Motor neuron (in vitro differentiated cells): ENCODE measurements at regions of chr1 and their contacts with region 1.

Region 1: DNA sequence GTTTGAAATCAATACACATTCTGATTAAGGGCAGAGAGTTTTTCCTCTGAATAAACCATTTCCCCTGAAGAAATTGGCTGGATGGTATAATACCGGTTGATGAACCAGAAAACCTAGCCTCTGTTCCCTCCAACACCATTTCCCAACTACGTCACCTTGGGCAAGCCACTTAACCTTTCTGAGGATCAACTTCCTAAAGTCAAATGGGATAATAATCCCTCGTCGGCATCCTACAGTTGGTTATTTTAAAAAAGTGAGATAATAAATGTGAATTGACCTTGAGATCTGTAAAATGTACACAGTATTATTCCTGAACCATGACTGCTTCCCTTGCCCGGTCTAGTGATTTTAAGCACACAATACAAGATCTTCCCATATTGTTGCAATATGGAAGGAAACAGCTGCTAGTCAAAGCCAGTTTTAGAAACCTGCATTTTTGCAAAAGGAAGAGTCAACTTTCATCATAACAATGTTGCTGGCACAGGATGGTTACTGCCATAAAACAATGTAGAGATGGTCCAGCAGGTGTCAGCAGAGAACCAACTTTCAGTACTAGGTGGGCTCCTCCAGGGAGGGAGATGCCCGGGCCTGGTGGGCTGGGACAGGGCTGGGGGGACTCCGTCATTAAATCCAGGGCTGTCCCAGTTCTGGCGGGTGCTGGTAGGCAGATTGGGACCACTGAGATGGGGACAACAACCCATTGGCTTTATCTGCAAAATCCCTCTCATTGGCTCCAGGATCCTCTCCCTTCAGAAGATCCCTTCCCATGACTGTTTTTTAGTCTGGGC is 5.2 kb upstream of the HLX start:
- ATAC-seq: peak; percentile 32 to 87 (median 74)
- H3K4me3 ChIP-seq: no peak overlapping the region
- H3K27ac ChIP-seq: no peak overlapping the region
- H3K4me1 ChIP-seq: peaks cover 9 to 18% of the 10 kb centered on the region in 2 donors

Region 2: DNA sequence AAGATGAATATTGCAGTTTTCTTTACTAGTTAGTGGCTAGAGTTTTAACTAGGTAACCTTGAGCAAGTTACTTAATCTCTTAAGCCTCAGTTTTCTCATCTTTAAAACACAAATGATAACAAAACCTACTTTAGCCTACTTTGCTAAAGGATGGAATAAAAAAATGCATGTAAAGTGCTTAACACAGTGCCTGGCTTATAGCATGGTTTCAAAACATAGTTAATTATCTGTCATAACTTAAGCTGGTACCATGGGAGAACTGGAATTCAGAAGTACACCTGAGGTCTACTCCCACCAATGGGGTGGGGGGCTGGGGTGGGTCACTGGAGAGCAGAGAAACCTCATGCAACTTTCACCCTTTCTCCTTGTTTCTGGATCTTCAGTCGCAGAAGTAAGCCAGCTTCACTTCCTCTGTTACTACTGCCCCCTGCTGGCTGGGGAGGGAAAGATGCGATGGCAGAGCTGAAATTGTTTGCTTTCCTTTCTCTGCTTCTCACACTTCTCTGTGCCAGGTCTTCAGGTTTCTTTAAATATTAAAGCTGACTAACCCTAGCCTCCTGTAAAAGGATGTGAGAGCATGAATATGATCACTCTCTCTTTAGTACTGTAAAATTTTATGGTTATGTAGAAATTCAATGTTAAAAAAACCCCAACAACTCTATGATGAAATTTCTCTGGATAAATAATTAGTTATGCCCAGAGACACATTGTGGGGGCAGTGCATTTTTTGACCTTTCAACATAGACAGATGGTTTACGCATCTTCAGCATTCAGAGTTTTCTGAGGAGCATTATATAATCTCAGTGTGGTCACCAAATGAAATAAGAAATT is 329.4 kb after region 1 on chr1:
- in situ Hi-C with region 1: loop called in 3 of 9 experiments (anchors 10 to 25 kb)
- ATAC-seq: peak in 3 of 8 experiments; percentile 27 to 50 (median 40)
- H3K4me3 ChIP-seq: no peak overlapping the region
- H3K27ac ChIP-seq: no peak overlapping the region
- H3K4me1 ChIP-seq: no peaks in the 10 kb centered on the region

Region 3: DNA sequence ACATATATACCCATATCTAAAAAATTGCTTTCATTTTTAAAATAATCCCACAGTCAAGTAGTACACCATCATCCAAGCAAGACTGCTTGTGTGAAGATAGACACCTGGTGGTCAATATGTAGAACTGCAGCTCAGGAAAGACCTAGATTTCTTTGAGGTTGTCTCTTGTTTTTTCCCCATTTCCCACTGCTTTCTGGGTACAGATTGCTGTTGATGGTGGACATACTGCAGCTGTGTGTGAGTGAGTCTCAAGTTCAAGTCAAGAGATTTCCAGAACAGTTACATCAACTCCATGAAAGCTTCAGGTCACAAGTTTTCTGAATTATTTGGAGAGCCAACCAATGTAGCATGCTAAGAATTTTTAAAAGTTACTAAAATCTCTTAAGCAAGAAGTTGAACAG is 561.4 kb after region 1 on chr1:
- in situ Hi-C with region 1: loop called in 1 of 9 experiments (anchors 25 kb)
- ATAC-seq: peak in 6 of 8 experiments; percentile 5 to 63 (median 40)
- H3K4me3 ChIP-seq: no peak overlapping the region
- H3K27ac ChIP-seq: no peak overlapping the region
- H3K4me1 ChIP-seq: no peaks in the 10 kb centered on the region